A673 (cell line): ENCODE measurements at regions of chr10 and their contacts with region 1.

Region 1: DNA sequence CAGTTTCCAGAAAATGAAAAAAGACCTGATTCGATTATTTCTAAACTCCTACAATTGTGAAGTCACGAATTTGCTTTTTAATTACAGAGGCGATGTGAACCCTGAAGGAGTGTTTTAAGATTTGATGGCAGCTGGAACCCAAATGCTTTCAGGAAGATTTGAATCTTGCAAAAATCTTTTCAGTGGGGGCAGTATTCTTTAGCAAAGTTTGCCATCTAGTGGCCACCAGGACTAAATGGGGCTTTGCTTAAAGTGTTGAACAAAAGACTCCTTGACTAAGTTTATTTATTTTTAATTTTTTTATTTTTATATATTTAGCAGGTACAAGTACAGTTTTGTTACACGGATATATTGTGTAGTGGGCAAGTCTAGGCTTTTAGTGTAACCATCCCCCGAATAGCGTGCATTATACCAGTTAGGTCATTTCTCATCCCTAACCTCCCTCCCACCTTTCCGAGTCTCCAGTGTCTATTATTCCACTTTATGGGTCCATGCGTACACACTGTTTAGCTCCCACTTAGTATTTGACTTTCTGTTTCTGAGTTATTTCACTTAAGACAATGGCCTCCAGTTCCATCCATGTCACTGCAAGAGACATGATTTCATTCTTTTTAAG is 98.8 kb downstream of the CACNB2 start:
- DNase-seq: peak; percentile 73
- H3K4me3 ChIP-seq: no peak overlapping the region
- H3K27ac ChIP-seq: peak overlapping the region; percentile 10
- H3K4me1 ChIP-seq: peaks cover 15% of the 10 kb centered on the region
- H3K27me3 ChIP-seq: no peaks in the 10 kb centered on the region
- CTCF ChIP-seq: peak; percentile 75

Region 2: DNA sequence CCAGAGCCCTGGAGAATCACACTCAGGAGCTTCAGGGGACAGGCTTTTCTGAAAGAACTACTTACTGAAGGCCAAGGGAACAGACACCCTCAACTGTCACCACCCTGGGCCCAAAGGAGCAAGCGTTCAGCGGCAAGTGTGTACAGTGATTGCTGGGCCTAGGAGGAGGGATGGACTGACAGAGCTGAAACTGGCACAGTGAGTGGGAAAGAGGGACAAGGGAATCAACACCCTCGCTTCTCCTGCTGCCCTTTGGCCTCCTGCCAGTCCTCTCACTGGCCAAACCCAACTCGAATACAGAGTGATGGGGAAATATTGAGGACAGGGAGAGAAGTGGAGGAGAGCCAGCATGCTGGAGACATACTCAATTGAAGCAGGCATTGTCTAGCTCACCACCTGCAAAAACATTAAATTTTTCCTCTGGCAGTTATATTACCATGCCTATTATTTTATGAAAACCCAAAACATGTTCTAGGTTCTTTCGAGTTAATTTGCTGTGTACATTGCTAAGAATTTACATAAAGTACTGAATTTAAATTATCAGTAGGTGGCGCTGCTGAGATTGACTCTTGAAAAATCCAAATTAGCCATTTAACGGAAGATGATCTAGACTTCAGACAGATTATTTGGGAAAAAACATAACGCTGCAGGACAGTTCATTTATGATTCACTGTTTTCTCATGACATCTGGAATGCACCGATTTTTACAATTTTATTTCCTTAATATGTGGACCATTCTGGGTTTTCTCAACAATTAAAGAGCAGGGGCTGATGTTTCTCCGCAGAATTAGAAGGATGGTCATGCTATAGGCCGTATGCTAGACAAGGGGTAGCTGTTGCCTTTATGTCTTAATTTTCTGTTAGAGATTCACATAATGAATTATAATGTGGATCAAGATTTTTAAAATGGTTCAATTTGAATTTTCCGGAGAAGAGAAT is 501.7 kb before region 1 on chr10:
- CTCF ChIA-PET with region 1: no interaction called
- POLR2A ChIA-PET with region 1: no interaction called
- intact Hi-C with region 1: loop called (anchors 2 kb)
- DNase-seq: peak; percentile 64
- H3K4me3 ChIP-seq: no peak overlapping the region
- H3K27ac ChIP-seq: no peak overlapping the region
- H3K4me1 ChIP-seq: no peaks in the 10 kb centered on the region
- H3K27me3 ChIP-seq: no peaks in the 10 kb centered on the region
- CTCF ChIP-seq: peak; percentile 77

Region 3: GRCh38 chr10:18498998-18499397 is 260.0 kb after region 1 on chr10:
- CTCF ChIA-PET with region 1: no interaction called
- POLR2A ChIA-PET with region 1: interaction called, 10 read pairs
- intact Hi-C with region 1: no loop called
- DNase-seq: no peak
- H3K4me3 ChIP-seq: no peak overlapping the region
- H3K27ac ChIP-seq: no peak overlapping the region
- H3K4me1 ChIP-seq: no peaks in the 10 kb centered on the region
- H3K27me3 ChIP-seq: no peaks in the 10 kb centered on the region
- CTCF ChIP-seq: no peak

Region 4: DNA sequence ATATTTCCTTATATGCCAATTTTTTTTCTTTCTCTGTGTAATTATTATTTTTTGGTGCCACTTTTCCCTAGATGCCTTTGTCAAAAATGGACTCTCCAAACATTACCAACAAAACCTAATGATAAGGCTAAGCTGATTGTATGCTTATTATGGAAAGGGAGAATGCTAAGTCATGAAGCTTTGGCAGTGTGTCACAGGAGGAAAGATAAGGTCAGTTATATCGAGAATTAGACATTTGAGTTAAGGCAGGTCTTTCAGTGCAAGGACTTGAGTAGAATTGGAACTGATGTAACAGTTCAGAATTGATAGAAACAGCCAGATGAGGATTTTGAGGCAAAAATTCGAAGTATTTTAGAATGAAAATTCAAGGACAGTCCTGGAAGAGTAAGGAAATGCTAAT is 792.8 kb after region 1 on chr10:
- CTCF ChIA-PET with region 1: no interaction called
- POLR2A ChIA-PET with region 1: no interaction called
- intact Hi-C with region 1: no loop called
- DNase-seq: no peak
- H3K4me3 ChIP-seq: no peak overlapping the region
- H3K27ac ChIP-seq: no peak overlapping the region
- H3K4me1 ChIP-seq: no peaks in the 10 kb centered on the region
- H3K27me3 ChIP-seq: no peaks in the 10 kb centered on the region
- CTCF ChIP-seq: no peak